Activated B cell treated with CpG ODN at 0.5 μM for 24 hours (primary cell): ENCODE measurements at regions of chr20 and their contacts with region 1.

Region 1: GRCh38 chr20:32972181-32973076 is 31.8 kb downstream of the SUN5 start:
- DNase-seq: peak; percentile 57
- ATAC-seq: peak; percentile 94
- H3K4me3 Mint-ChIP-seq: no peak overlapping the region
- H3K27ac Mint-ChIP-seq: no peak overlapping the region
- H3K4me1 Mint-ChIP-seq: peaks cover 19% of the 10 kb centered on the region
- H3K27me3 Mint-ChIP-seq: no peaks in the 10 kb centered on the region
- CTCF ChIP-seq: no peak

Region 2: DNA sequence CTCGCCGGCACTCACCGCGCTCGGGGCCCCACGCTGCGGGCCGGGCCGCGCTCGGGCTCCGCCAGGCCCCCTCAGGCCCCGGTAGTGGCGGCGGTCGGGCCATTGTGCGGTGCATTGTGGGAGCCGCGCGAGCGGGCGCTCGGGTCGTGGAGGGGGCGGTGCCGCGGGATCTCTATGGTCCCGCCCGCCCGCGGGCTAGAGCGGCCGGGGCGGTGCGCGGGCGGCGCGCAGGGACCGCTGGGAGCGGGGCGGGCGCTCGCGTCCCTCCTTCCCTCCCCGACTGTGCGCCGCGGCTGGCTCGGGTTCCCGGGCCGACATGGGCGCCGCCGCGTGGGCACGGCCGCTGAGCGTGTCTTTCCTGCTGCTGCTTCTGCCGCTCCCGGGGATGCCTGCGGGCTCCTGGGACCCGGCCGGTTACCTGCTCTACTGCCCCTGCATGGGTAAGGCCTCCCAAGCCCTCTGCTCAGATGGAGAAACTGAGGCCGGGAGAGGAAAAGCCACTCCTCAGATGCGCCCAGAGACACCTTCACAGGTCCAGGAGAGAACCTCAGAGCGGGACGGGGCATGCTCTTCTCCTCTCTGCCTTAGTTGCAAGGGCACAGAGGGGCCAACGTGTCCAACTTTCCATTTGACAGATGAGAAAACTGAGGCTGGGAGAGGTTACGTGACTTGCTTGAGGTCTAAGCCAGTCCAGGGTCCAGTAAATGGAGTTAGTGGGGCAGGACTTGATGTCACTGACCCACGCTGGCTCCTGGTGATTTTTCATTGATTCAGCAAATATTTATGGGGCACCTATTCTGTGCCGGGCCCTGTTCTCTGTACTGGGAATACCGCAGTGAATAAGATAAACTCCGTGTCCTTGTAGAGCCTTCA is 764.6 kb before region 1 on chr20 and contains the starts of genes PLAGL2 and POFUT1:
- CTCF ChIA-PET with region 1: no interaction called
- POLR2A ChIA-PET with region 1: no interaction called
- intact Hi-C with region 1: loop called (anchors 5 kb)
- DNase-seq: peak; percentile 92
- ATAC-seq: peak; percentile 97
- H3K4me3 Mint-ChIP-seq: peak within 1 kb of the TSS; percentile 91
- H3K27ac Mint-ChIP-seq: peak within 1 kb of the TSS; percentile 85
- H3K4me1 Mint-ChIP-seq: peaks cover 62% of the 10 kb centered on the region
- H3K27me3 Mint-ChIP-seq: no peaks in the 10 kb centered on the region
- CTCF ChIP-seq: no peak
- total RNA-seq, gene PLAGL2: 17.3 and 17.9 TPM in 2 replicates
- total RNA-seq, gene POFUT1: 20.4 and 24.0 TPM in 2 replicates

Region 3: DNA sequence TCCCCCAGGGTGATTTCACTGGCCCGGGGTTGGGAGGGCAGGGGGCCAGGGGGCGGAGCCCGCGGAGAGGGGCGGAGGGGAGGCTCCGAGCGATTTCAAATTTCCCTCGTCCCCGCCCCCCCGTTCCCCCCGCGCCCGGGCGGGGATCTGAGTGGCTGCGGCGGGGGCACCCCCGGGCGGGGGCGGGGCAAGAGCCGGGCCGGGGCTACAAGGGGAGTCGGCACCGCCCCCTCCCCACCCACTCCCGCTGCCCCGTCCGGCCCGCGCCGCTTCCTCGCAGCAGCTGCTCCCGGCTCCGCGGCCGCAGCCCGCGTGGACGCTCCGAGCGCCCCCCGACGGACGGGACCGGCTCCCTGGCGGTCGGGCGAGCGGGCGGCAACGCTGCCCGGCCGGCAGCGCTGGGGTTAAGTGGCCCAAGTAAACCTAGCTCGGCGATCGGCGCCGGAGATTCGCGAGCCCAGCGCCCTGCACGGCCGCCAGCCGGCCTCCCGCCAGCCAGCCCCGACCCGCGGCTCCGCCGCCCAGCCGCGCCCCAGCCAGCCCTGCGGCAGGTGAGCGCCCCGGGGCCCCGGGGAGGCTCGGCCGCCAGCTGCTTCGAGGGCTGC is 210.2 kb before region 1 on chr20 and contains the start of gene DNMT3B:
- CTCF ChIA-PET with region 1: no interaction called
- POLR2A ChIA-PET with region 1: no interaction called
- intact Hi-C with region 1: loop called (anchors 1 kb)
- DNase-seq: peak; percentile 81
- ATAC-seq: peak; percentile 86
- H3K4me3 Mint-ChIP-seq: peak within 1 kb of the TSS; percentile 86
- H3K27ac Mint-ChIP-seq: no peak within 1 kb of the TSS
- H3K4me1 Mint-ChIP-seq: peaks cover 17% of the 10 kb centered on the region
- H3K27me3 Mint-ChIP-seq: peaks cover 2% of the 10 kb centered on the region
- CTCF ChIP-seq: no peak
- total RNA-seq, gene DNMT3B: 0.20 and 0.32 TPM in 2 replicates

Region 4: GRCh38 chr20:32991383-32991782 is 19.0 kb after region 1 on chr20:
- CTCF ChIA-PET with region 1: no interaction called
- POLR2A ChIA-PET with region 1: interaction called, 18 read pairs
- intact Hi-C with region 1: loop called (anchors 1 kb)
- DNase-seq: no peak
- ATAC-seq: peak; percentile 83
- H3K4me3 Mint-ChIP-seq: peak overlapping the region; percentile 24
- H3K27ac Mint-ChIP-seq: peak overlapping the region; percentile 26
- H3K4me1 Mint-ChIP-seq: peaks cover 23% of the 10 kb centered on the region
- H3K27me3 Mint-ChIP-seq: peaks cover 3% of the 10 kb centered on the region
- CTCF ChIP-seq: no peak

Region 5: DNA sequence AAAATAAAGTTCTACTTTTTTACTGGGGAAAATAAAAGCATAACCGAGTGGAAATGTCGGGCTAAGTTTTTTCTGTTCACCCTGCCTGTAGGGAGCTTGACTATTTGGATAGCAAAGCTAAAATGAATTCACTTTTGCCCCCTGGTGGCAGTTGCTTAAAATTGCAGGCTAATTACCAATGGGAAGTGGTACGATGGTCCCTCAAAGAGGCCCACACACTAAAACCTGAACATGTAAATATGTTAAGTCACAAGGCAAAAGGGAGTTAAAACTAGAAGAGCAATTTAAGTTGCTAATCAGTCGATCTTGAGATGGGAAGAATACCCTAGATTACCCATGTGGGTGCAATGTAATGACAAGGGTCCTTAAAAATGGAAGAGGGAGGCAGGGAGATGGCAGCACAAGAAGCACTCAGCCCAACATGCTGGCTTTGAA is 32.7 kb after region 1 on chr20:
- CTCF ChIA-PET with region 1: no interaction called
- POLR2A ChIA-PET with region 1: interaction called, 4 read pairs
- intact Hi-C with region 1: loop called (anchors 5 kb)
- DNase-seq: no peak
- ATAC-seq: no peak
- H3K4me3 Mint-ChIP-seq: no peak overlapping the region
- H3K27ac Mint-ChIP-seq: no peak overlapping the region
- H3K4me1 Mint-ChIP-seq: peaks cover under 1% of the 10 kb centered on the region
- H3K27me3 Mint-ChIP-seq: no peaks in the 10 kb centered on the region
- CTCF ChIP-seq: no peak

Region 6: GRCh38 chr20:34516247-34517113 is 1544.1 kb after region 1 on chr20 and contains the start of gene DYNLRB1:
- CTCF ChIA-PET with region 1: no interaction called
- POLR2A ChIA-PET with region 1: no interaction called
- intact Hi-C with region 1: loop called (anchors 5 kb)
- DNase-seq: peak; percentile 88
- ATAC-seq: peak; percentile 82
- H3K4me3 Mint-ChIP-seq: peak within 1 kb of the TSS; percentile 98
- H3K27ac Mint-ChIP-seq: peak within 1 kb of the TSS; percentile 96
- H3K4me1 Mint-ChIP-seq: peaks cover 48% of the 10 kb centered on the region
- H3K27me3 Mint-ChIP-seq: no peaks in the 10 kb centered on the region
- CTCF ChIP-seq: no peak
- total RNA-seq, gene DYNLRB1: 62.7 and 65.9 TPM in 2 replicates